Dendritic cell treated with granulocyte-macrophage colony-stimulating factor and Interleukin-4, amounts not matched to agents 40 ng/mL and 50 ng/mL, for 4 days (primary cell): ENCODE measurements at regions of chr2 and their contacts with region 1.

Region 1: DNA sequence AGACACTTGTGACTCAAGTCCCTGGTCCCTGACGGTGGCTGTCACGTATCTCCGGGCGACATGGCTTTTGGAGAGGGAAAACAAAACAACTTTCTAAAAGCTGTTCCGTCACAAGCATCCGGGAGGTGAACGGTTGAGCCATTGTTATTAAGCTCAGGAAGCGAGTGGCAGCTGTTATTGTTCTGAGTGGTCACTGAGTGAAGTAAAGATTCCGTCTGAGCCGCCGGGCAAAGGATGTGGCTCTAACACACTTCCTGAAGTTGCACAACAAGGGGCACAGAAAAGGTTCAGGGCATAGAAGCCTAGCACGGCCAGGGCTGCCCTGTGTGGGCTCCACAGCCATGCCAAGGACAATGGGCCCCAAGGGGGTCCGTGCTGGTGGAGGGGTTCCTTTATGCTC is 24.3 kb downstream of the INPP5D start:
- H3K4me3 Mint-ChIP-seq: peak overlapping the region; percentile 64
- H3K27ac Mint-ChIP-seq: peak overlapping the region; percentile 86
- H3K4me1 Mint-ChIP-seq: peaks cover 96% of the 10 kb centered on the region
- H3K27me3 Mint-ChIP-seq: no peaks in the 10 kb centered on the region

Region 2: GRCh38 chr2:233061591-233062450 is 22.7 kb before region 1 on chr2:
- intact Hi-C with region 1: loop called (anchors 2 kb)
- H3K4me3 Mint-ChIP-seq: peak overlapping the region; percentile 95
- H3K27ac Mint-ChIP-seq: peak overlapping the region; percentile 92
- H3K4me1 Mint-ChIP-seq: peaks cover 71% of the 10 kb centered on the region
- H3K27me3 Mint-ChIP-seq: no peaks in the 10 kb centered on the region

Region 3: DNA sequence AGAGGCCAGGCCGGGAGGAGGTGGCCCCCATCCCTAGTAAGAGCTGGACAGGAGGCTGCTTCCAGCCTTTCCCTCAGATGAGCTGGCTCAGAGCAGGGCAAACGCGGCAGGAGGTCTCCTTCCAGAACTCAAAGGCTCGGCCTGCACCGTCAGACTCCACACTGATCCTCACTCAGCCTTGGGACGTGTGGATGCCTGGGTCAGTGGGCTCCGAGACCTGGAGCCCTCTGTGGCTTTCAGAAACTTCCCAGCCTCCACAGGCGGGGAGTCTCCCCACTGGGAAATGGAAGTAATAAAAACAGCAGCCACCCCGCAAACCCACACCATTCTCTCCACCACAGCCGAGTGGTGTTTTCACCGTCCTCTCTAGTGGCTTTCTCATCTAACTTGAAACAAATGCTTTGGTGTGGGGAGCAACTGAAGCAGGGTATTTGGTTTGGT is 30.0 kb after region 1 on chr2:
- intact Hi-C with region 1: no loop called
- H3K4me3 Mint-ChIP-seq: no peak overlapping the region
- H3K27ac Mint-ChIP-seq: peak overlapping the region; percentile 66
- H3K4me1 Mint-ChIP-seq: peaks cover 72% of the 10 kb centered on the region
- H3K27me3 Mint-ChIP-seq: no peaks in the 10 kb centered on the region

Region 4: DNA sequence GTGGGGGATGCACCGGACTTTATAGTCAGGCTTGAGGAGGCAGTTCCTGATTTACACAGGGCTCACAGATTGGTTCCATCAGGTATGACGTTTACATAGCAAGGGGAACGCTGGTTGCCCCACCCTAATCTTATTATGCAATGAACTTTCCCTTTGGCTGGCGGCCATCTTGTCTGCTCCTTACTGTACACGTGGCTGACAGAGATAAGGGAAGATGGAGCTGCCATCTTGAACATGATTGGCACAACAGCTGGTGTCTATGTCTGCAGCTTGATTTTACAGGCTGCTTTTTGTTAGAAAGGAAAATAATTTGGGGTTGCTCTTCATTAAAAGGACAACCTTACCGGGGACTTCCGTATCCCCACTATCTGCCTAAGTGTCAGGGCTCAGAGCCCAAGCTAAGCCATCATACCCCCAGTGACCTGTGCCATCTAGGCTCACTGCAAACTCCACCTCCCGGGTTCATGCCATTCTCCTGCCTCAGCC is 133.4 kb after region 1 on chr2:
- intact Hi-C with region 1: no loop called
- H3K4me3 Mint-ChIP-seq: no peak overlapping the region
- H3K27ac Mint-ChIP-seq: no peak overlapping the region
- H3K4me1 Mint-ChIP-seq: peaks cover 6% of the 10 kb centered on the region
- H3K27me3 Mint-ChIP-seq: no peaks in the 10 kb centered on the region